ENCODE measurements at regions of chr6 and their contacts with region 1.

Region 1: GRCh38 chr6:122749451-122750050 is 30.0 kb upstream of the FABP7 start:
- DNase-seq: no peak
- ATAC-seq: no peak
- H3K4me3 ChIP-seq: no peak overlapping the region
- H3K4me3 Mint-ChIP-seq: no peak overlapping the region
- H3K27ac ChIP-seq: no peak overlapping the region
- H3K27ac Mint-ChIP-seq: no peak overlapping the region
- H3K4me1 ChIP-seq: peaks cover 7 to 17% of the 10 kb centered on the region in 2 donors
- H3K4me1 Mint-ChIP-seq: peaks cover 48% of the 10 kb centered on the region
- H3K27me3 ChIP-seq: no peaks in the 10 kb centered on the region
- H3K27me3 Mint-ChIP-seq: no peaks in the 10 kb centered on the region
- CTCF ChIP-seq: no peak

Region 2: GRCh38 chr6:122789182-122790027 is 39.9 kb after region 1 on chr6 and contains the start of gene SMPDL3A:
- CTCF ChIA-PET with region 1: interaction called, 5 read pairs
- POLR2A ChIA-PET with region 1: interaction called, 3 read pairs
- intact Hi-C with region 1: loop called (anchors 2 kb)
- DNase-seq: peak; percentile 49
- ATAC-seq: peak; percentile 71
- H3K4me3 ChIP-seq: peak within 1 kb of the TSS; percentile 36 to 60 (median 57)
- H3K4me3 Mint-ChIP-seq: peak within 1 kb of the TSS; percentile 75
- H3K27ac ChIP-seq: no peak within 1 kb of the TSS
- H3K27ac Mint-ChIP-seq: peak within 1 kb of the TSS; percentile 91
- H3K4me1 ChIP-seq: peaks cover 18 to 23% of the 10 kb centered on the region in 2 donors
- H3K4me1 Mint-ChIP-seq: peaks cover 21% of the 10 kb centered on the region
- H3K27me3 ChIP-seq: peaks cover 0 to 15% (median 5%) of the 10 kb centered on the region in 4 experiments
- H3K27me3 Mint-ChIP-seq: peaks cover 22% of the 10 kb centered on the region
- CTCF ChIP-seq: peak; percentile 26
- total RNA-seq, gene SMPDL3A: 1.2 and 2.0 TPM in 2 replicates

Region 3: GRCh38 chr6:123007885-123008284 is 258.3 kb after region 1 on chr6:
- CTCF ChIA-PET with region 1: no interaction called
- POLR2A ChIA-PET with region 1: no interaction called
- intact Hi-C with region 1: no loop called
- DNase-seq: no peak
- ATAC-seq: no peak
- H3K4me3 ChIP-seq: no peak overlapping the region
- H3K4me3 Mint-ChIP-seq: no peak overlapping the region
- H3K27ac ChIP-seq: no peak overlapping the region
- H3K27ac Mint-ChIP-seq: no peak overlapping the region
- H3K4me1 ChIP-seq: no peaks in the 10 kb centered on the region
- H3K4me1 Mint-ChIP-seq: no peaks in the 10 kb centered on the region
- H3K27me3 ChIP-seq: no peaks in the 10 kb centered on the region
- H3K27me3 Mint-ChIP-seq: no peaks in the 10 kb centered on the region
- CTCF ChIP-seq: no peak

Measured in B cell (primary cell).